CD4-positive, alpha-beta T cell (primary cell): ENCODE measurements at regions of chr18 and their contacts with region 1.

Region 1: DNA sequence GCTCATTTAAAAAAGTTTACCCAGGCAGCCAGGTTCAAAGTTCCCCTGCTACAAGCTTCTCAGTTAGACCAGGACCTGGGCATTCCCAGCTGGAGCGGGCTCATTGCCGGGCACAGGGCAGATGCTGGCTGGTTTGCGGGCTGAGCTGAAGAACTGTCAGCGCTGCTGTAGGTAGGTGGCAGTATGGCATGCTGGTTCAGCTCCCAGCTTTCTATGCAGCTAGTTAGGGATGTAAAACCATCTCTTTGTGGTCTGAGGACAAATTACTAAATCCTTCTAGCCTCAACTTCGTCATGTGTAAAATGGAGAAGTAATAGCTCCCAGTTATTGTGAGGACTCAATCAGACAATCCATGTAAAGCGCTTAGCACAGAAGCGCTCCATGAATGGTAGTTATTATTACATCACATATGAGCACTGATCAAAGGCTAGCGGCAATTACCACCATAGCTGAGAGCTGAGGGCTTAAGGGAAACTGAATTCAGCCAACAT is 2.4 kb upstream of the LDLRAD4 start:
- DNase-seq: peak; percentile 30 to 82 (median 51)
- ATAC-seq: peak; percentile 57
- H3K4me3 ChIP-seq: peak overlapping the region; percentile 58
- H3K4me3 Mint-ChIP-seq: peak overlapping the region; percentile 98
- H3K27ac ChIP-seq: peak overlapping the region in 1 of 2 donors; percentile 15
- H3K27ac Mint-ChIP-seq: peak overlapping the region; percentile 90
- H3K4me1 ChIP-seq: peaks cover 27% of the 10 kb centered on the region
- H3K4me1 Mint-ChIP-seq: peaks cover 35% of the 10 kb centered on the region
- H3K27me3 ChIP-seq: peaks cover 0 to 5% of the 10 kb centered on the region in 2 experiments
- H3K27me3 Mint-ChIP-seq: peaks cover 9% of the 10 kb centered on the region
- CTCF ChIP-seq: peak; percentile 81

Region 2: GRCh38 chr18:13375302-13376255 is 159.4 kb after region 1 on chr18:
- CTCF ChIA-PET with region 1: interaction called, 4 read pairs
- POLR2A ChIA-PET with region 1: interaction called, 12 read pairs
- intact Hi-C with region 1: loop called (anchors 1 to 5 kb)
- DNase-seq: peak; percentile 55 to 92 (median 74)
- ATAC-seq: peak; percentile 69
- H3K4me3 ChIP-seq: peak overlapping the region; percentile 35
- H3K4me3 Mint-ChIP-seq: peak overlapping the region; percentile 86
- H3K27ac ChIP-seq: peak overlapping the region; percentile 89 to 92
- H3K27ac Mint-ChIP-seq: peak overlapping the region; percentile 90
- H3K4me1 ChIP-seq: peaks cover 81% of the 10 kb centered on the region
- H3K4me1 Mint-ChIP-seq: peaks cover 78% of the 10 kb centered on the region
- H3K27me3 ChIP-seq: no peaks in the 10 kb centered on the region
- H3K27me3 Mint-ChIP-seq: no peaks in the 10 kb centered on the region
- CTCF ChIP-seq: no peak

Region 3: GRCh38 chr18:13464432-13465123 is 248.4 kb after region 1 on chr18:
- CTCF ChIA-PET with region 1: no interaction called
- POLR2A ChIA-PET with region 1: interaction called, 4 read pairs
- intact Hi-C with region 1: loop called in 1 of 2 experiments (anchors 1 kb)
- DNase-seq: peak; percentile 36 to 86 (median 68)
- ATAC-seq: peak; percentile 95
- H3K4me3 ChIP-seq: peak overlapping the region; percentile 63
- H3K4me3 Mint-ChIP-seq: peak overlapping the region; percentile 91
- H3K27ac ChIP-seq: peak overlapping the region; percentile 60 to 64
- H3K27ac Mint-ChIP-seq: peak overlapping the region; percentile 97
- H3K4me1 ChIP-seq: peaks cover 50% of the 10 kb centered on the region
- H3K4me1 Mint-ChIP-seq: peaks cover 86% of the 10 kb centered on the region
- H3K27me3 ChIP-seq: no peaks in the 10 kb centered on the region
- H3K27me3 Mint-ChIP-seq: no peaks in the 10 kb centered on the region
- CTCF ChIP-seq: peak; percentile 19

Region 4: GRCh38 chr18:13539050-13539449 is 322.9 kb after region 1 on chr18:
- CTCF ChIA-PET with region 1: interaction called, 3 read pairs
- POLR2A ChIA-PET with region 1: interaction called, 9 read pairs
- intact Hi-C with region 1: loop called in 1 of 2 experiments (anchors 1 kb)
- DNase-seq: peak in 11 of 14 experiments; percentile 14 to 71 (median 44)
- ATAC-seq: peak; percentile 93
- H3K4me3 ChIP-seq: no peak overlapping the region
- H3K4me3 Mint-ChIP-seq: peak overlapping the region; percentile 83
- H3K27ac ChIP-seq: peak overlapping the region in 1 of 2 donors; percentile 12
- H3K27ac Mint-ChIP-seq: peak overlapping the region; percentile 89
- H3K4me1 ChIP-seq: peaks cover 27% of the 10 kb centered on the region
- H3K4me1 Mint-ChIP-seq: peaks cover 81% of the 10 kb centered on the region
- H3K27me3 ChIP-seq: no peaks in the 10 kb centered on the region
- H3K27me3 Mint-ChIP-seq: no peaks in the 10 kb centered on the region
- CTCF ChIP-seq: no peak

Region 5: GRCh38 chr18:13629841-13630715 is 413.9 kb after region 1 on chr18:
- CTCF ChIA-PET with region 1: interaction called, 5 read pairs
- POLR2A ChIA-PET with region 1: interaction called, 4 read pairs
- intact Hi-C with region 1: loop called (anchors 1 kb)
- DNase-seq: peak in 10 of 14 experiments; percentile 25 to 74 (median 42)
- ATAC-seq: peak; percentile 97
- H3K4me3 ChIP-seq: no peak overlapping the region
- H3K4me3 Mint-ChIP-seq: no peak overlapping the region
- H3K27ac ChIP-seq: no peak overlapping the region
- H3K27ac Mint-ChIP-seq: peak overlapping the region; percentile 43
- H3K4me1 ChIP-seq: no peaks in the 10 kb centered on the region
- H3K4me1 Mint-ChIP-seq: peaks cover 24% of the 10 kb centered on the region
- H3K27me3 ChIP-seq: no peaks in the 10 kb centered on the region
- H3K27me3 Mint-ChIP-seq: no peaks in the 10 kb centered on the region
- CTCF ChIP-seq: peak; percentile 63